WTC11 (cell line): ENCODE measurements at regions of chr6 and their contacts with region 1.

Region 1: DNA sequence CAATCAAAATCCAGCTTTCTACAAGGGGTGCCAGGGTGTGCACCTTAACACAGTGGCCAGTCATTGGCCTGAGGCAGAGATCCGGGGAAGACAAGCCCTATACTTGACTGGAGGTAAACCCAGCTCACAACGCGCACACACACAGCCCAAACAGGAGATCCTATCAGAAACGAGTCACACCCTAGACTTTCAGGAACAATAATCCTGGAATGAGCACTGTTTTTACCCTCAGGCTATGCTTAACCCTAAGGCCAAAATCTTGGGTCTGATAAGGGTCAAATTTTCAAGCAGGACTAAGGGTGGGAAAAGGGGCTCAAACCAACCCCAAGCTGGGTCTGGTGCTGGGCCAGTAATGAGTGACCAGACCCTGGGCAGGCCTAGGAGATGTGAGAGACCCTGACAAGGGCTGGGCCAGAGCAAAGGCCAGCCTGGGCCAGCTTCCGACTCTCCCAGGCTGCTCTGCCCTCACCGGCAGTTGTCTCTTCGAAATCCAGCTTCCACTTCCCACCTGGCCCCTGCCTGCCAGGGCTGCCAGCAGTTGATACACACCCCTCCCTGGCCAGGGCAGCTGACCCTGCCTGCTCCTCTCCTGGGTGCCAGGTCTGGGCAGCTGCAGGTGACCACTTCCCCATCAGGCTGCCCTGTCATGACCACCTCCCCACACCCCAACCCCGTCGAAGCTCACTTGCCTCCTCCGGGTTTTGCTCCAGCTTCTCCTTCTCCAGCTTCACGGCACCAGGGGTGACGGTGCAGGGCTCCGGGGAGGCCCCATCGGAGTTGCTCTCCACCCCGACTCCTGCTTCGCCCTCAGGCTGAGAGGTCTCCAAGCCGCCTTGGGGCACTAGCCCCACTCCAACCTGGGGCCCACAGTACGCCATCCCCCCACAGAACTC is 709 bp downstream of the POU5F1 start:
- DNase-seq: no peak
- ATAC-seq: no peak
- H3K4me3 Mint-ChIP-seq: peak overlapping the region; percentile 97
- H3K27ac Mint-ChIP-seq: peak overlapping the region; percentile 91
- H3K4me1 Mint-ChIP-seq: peaks cover 65% of the 10 kb centered on the region
- H3K27me3 Mint-ChIP-seq: no peaks in the 10 kb centered on the region
- CTCF ChIP-seq: no peak

Region 2: DNA sequence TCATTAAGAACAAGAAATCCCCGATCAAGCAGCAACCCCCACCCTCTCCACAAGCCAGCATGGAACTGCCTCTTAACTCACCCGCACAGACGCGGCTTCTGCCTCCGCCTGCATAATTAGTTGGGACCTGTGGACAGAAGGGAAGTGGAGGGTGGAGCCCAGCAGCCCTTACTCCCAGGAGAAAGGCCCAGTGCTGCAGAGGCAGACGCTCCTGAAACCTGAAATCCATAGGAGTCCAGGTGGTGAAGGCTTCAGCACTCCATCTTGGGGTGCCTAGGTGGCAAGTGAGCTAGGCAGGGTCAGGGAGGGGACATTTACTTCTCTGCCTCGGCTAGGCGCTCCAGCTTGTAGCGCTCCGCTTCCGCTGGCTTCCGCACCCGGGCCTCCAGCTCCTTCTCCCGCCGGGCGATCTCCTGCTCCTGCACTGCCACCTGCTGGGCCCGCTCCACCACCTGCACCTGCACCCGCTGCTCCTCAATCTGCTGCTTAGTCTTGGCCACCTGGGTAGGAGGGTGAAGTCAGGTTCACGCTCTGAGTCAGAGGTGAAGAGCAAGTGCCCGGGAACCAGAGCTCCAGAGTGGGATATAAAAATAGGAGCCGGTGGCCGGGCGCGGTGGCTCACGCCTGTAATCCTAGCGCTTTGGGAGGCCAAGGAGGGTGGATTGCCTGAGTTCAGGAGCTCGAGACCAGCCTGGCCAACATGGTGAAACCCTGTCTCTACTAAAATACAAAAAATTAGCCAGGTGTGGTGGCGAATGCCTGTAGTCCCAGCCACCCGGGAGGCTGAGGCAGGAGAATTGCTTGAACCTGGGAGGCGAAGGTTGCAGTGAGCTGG is 439.0 kb before region 1 on chr6:
- CTCF ChIA-PET with region 1: no interaction called
- POLR2A ChIA-PET with region 1: no interaction called
- DNase-seq: peak; percentile 88
- ATAC-seq: peak; percentile 65
- H3K4me3 Mint-ChIP-seq: no peak overlapping the region
- H3K27ac Mint-ChIP-seq: peak overlapping the region; percentile 36; the same call in 1 of the 2 replicates
- H3K4me1 Mint-ChIP-seq: peaks cover 3% of the 10 kb centered on the region; the same call in 1 of the 2 replicates
- H3K27me3 Mint-ChIP-seq: no peaks in the 10 kb centered on the region
- CTCF ChIP-seq: peak; percentile 19; the same call in 1 of the 2 replicates

Region 3: GRCh38 chr6:30960907-30961673 is 208.7 kb before region 1 on chr6:
- CTCF ChIA-PET with region 1: no interaction called
- POLR2A ChIA-PET with region 1: no interaction called
- DNase-seq: no peak
- ATAC-seq: no peak
- H3K4me3 Mint-ChIP-seq: no peak overlapping the region
- H3K27ac Mint-ChIP-seq: no peak overlapping the region
- H3K4me1 Mint-ChIP-seq: peaks cover 13% of the 10 kb centered on the region
- H3K27me3 Mint-ChIP-seq: peaks cover 32% of the 10 kb centered on the region
- CTCF ChIP-seq: no peak

Region 4: DNA sequence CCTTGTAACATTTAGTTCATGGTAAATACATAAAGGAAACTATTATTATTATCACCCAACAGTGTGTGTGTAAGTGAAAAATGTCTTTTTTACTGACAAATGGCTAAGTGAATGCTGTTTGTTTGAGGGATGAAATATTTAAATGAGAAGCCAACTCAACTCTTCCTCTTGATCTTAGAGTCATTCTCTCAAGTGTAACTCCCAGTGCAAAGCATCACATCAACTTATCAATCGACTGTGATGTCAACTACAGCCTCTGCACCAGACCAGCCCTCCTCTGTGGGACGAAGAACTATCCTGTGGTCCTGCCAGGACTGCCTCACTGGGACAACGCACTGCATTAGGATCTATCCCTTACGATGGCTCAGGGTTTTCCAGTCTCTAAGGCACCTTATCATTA is 62.7 kb before region 1 on chr6:
- CTCF ChIA-PET with region 1: no interaction called
- POLR2A ChIA-PET with region 1: no interaction called
- DNase-seq: no peak
- ATAC-seq: no peak
- H3K4me3 Mint-ChIP-seq: no peak overlapping the region
- H3K27ac Mint-ChIP-seq: no peak overlapping the region
- H3K4me1 Mint-ChIP-seq: peaks cover 19% of the 10 kb centered on the region
- H3K27me3 Mint-ChIP-seq: peaks cover 19% of the 10 kb centered on the region
- CTCF ChIP-seq: no peak

Region 5: DNA sequence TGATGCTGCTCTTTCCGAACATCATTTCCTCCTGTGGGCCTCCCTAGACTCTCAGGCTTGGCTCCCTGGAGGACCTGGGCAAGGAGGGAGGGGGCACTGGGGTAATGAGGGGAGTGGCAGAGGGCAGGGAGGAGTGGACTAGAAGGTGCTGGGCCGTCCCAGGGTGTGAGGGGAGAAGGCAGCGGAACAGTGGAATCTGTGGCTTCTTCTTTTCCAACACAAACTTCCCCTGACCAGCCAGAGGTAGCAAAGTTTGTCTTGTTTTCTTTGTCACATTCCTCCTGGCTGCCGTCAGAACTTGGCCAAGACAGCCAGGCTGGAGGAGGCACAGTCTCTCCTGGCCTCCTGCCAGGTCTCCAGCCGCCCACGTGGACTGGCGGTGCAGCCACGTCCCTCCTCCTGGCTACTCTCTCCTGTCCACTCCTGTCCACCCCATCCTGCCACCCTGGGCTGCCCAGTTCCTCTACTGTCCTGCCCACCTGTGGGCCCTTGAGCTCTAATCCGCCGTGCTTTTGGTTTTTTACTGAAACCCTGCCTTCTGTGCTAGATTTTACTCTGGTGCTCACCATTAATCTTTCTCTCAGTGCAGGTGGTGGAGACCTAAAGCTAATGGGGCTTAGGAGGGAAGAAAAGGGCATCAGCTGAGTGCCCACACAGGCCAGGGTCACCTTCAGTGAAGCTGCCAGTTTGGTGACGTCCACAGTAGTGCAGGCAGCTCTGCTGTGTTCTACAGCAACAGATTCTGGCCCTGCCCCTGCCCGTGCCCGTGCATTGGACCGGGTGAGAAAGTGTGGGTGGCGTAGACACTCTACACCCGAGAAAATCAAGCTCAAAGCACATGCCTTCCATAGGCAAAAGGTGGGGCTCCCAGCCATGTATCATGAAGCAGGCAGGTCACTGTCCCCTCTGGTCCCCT is 46.7 kb before region 1 on chr6:
- CTCF ChIA-PET with region 1: no interaction called
- POLR2A ChIA-PET with region 1: no interaction called
- DNase-seq: no peak
- ATAC-seq: no peak
- H3K4me3 Mint-ChIP-seq: no peak overlapping the region
- H3K27ac Mint-ChIP-seq: no peak overlapping the region
- H3K4me1 Mint-ChIP-seq: peaks cover 23% of the 10 kb centered on the region
- H3K27me3 Mint-ChIP-seq: peaks cover 7% of the 10 kb centered on the region; the same call in 1 of the 2 replicates
- CTCF ChIP-seq: no peak

Region 6: GRCh38 chr6:31143148-31143547 is 26.6 kb before region 1 on chr6:
- CTCF ChIA-PET with region 1: interaction called, 10 read pairs
- POLR2A ChIA-PET with region 1: interaction called, 11 read pairs
- DNase-seq: no peak
- ATAC-seq: peak; percentile 53
- H3K4me3 Mint-ChIP-seq: no peak overlapping the region
- H3K27ac Mint-ChIP-seq: peak overlapping the region; percentile 76; the same call in 1 of the 2 replicates
- H3K4me1 Mint-ChIP-seq: peaks cover 38% of the 10 kb centered on the region
- H3K27me3 Mint-ChIP-seq: peaks cover 4% of the 10 kb centered on the region
- CTCF ChIP-seq: no peak

Region 7: GRCh38 chr6:31158140-31158862 is 11.5 kb before region 1 on chr6 and contains the start of gene TCF19:
- CTCF ChIA-PET with region 1: interaction called, 19 read pairs
- POLR2A ChIA-PET with region 1: interaction called, 44 read pairs
- DNase-seq: peak; percentile 99
- ATAC-seq: peak; percentile 76
- H3K4me3 Mint-ChIP-seq: peak within 1 kb of the TSS; percentile 96
- H3K27ac Mint-ChIP-seq: peak within 1 kb of the TSS; percentile 93
- H3K4me1 Mint-ChIP-seq: peaks cover 40% of the 10 kb centered on the region
- H3K27me3 Mint-ChIP-seq: no peaks in the 10 kb centered on the region
- CTCF ChIP-seq: no peak
- total RNA-seq, gene TCF19: 10.2 to 12.7 TPM (median 10.7 TPM) in 3 replicates

Region 8: GRCh38 chr6:31403283-31403989 is 233.7 kb after region 1 on chr6 and contains the start of gene MICA:
- CTCF ChIA-PET with region 1: no interaction called
- POLR2A ChIA-PET with region 1: interaction called, 10 read pairs
- DNase-seq: peak; percentile 94
- ATAC-seq: peak; percentile 79
- H3K4me3 Mint-ChIP-seq: peak within 1 kb of the TSS; percentile 98
- H3K27ac Mint-ChIP-seq: peak within 1 kb of the TSS; percentile 96
- H3K4me1 Mint-ChIP-seq: peaks cover 55% of the 10 kb centered on the region
- H3K27me3 Mint-ChIP-seq: peaks cover 24% of the 10 kb centered on the region
- CTCF ChIP-seq: no peak
- total RNA-seq, gene MICA: 11.4 to 12.9 TPM (median 11.7 TPM) in 3 replicates